IMR-90 (cell line): ENCODE measurements at regions of chr1 and their contacts with region 1.

Region 1: DNA sequence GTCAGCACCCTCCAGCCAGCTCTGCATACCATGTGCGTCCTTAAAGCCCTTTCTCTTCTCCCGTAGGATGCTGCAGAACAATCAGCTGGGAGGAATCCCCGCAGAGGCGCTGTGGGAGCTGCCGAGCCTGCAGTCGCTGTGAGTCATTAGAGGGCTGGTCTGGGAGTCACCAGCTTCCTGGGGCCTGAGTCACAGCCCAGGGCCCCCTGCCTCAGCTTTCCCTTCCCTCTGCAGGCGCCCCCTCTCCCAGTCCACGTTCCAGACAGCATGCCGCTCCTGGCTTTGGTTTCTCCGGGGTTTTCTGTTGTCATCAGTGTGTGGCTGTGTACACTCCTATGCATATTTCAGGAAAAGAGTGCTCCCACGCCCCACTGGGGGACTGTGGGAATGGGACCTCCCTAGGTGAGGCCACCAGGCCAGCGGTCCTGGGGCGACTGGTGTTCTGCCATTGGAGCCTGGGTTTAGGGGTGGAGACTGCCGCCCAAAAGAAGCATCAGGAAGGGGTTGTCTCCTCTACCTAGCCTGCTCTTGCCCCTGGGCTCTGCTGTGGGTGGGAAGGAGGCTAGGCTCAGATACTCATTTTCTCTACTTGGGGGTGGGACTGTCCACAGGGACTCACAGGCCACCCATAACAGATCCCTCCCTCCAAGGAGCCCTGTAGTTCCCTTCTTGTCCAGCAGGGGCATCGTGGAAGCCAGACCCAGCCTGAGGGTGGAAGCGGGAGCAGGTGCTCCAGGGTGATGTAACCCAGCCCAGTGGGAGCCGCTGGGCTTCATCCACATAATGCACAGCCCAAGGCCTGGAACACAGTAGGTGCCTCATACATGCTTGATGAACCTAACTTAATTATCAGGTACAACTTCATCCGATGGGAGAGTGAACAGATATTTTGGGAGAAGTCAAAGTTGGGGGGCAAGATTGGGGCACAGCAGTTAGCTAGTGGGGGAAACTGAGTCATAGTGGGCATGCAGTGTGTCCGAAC is 42.5 kb downstream of the LGR6 start:
- DNase-seq: peak; percentile 96
- ATAC-seq: peak; percentile 95
- H3K4me3 ChIP-seq: no peak overlapping the region
- H3K27ac ChIP-seq: peak overlapping the region; percentile 35
- H3K4me1 ChIP-seq: peaks cover 16% of the 10 kb centered on the region
- H3K27me3 ChIP-seq: peaks cover 4% of the 10 kb centered on the region
- CTCF ChIP-seq: peak; percentile 65
- POLR2A ChIP-seq: no peak
- RAD21 ChIP-seq: peak; percentile 41

Region 2: GRCh38 chr1:202192770-202193613 is 43.2 kb before region 1 on chr1:
- CTCF ChIA-PET with region 1: interaction called, 13 read pairs
- POLR2A ChIA-PET with region 1: no interaction called
- dilution Hi-C with region 1: no loop called
- in situ Hi-C with region 1: no loop called
- intact Hi-C with region 1: no loop called
- DNase-seq: peak; percentile 35
- ATAC-seq: peak; percentile 85
- H3K4me3 ChIP-seq: no peak overlapping the region
- H3K27ac ChIP-seq: no peak overlapping the region
- H3K4me1 ChIP-seq: no peaks in the 10 kb centered on the region
- H3K27me3 ChIP-seq: peaks cover 56% of the 10 kb centered on the region
- CTCF ChIP-seq: peak; percentile 81
- POLR2A ChIP-seq: no peak
- RAD21 ChIP-seq: peak; percentile 79

Region 3: GRCh38 chr1:202283379-202283844 is 47.3 kb after region 1 on chr1:
- CTCF ChIA-PET with region 1: interaction called, 3 read pairs
- POLR2A ChIA-PET with region 1: no interaction called
- dilution Hi-C with region 1: no loop called
- in situ Hi-C with region 1: no loop called
- intact Hi-C with region 1: loop called (anchors 2 kb)
- DNase-seq: peak; percentile 75
- ATAC-seq: peak; percentile 33
- H3K4me3 ChIP-seq: no peak overlapping the region
- H3K27ac ChIP-seq: no peak overlapping the region
- H3K4me1 ChIP-seq: peaks cover 37% of the 10 kb centered on the region
- H3K27me3 ChIP-seq: no peaks in the 10 kb centered on the region
- CTCF ChIP-seq: no peak
- POLR2A ChIP-seq: no peak
- RAD21 ChIP-seq: no peak